ENCODE measurements at regions of chr2 and their contacts with region 1.

Region 1: DNA sequence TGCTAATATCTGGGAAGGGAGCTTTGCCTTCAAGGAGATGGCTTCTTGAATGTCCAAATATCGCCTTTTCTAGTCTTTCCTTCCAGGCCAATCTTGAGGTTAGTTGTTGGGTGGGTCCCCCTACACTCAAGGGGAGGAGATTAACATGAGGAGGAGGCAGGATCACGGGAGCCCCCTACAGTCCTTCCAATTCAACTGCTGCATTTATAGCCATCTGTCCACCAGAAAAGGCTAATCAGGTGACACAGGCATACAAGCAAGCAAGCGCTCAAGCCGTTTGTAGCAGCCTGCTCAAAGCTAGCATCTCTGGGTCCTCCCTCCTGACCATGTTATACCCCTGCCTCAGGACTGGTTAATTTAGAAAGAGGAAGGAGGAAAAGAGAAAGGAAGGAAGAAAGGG is 87.6 kb downstream of the MRPS9 start:
- DNase-seq: peak in 1 of 2 experiments; percentile 61
- H3K4me3 ChIP-seq: peak overlapping the region in 2 of 4 experiments; percentile 26 to 43; a peak in 2 of 8 replicates
- H3K27ac ChIP-seq: no peak overlapping the region
- H3K4me1 ChIP-seq: peaks cover 0 to 6% (median 2%) of the 10 kb centered on the region in 4 experiments; a peak in 2 of 7 replicates
- H3K27me3 ChIP-seq: no peaks in the 10 kb centered on the region
- CTCF ChIP-seq: peak; percentile 53 to 77 (median 59)
- EP300 ChIP-seq: no peak
- POLR2A ChIP-seq: no peak
- RAD21 ChIP-seq: peak; percentile 30 to 48

Region 2: DNA sequence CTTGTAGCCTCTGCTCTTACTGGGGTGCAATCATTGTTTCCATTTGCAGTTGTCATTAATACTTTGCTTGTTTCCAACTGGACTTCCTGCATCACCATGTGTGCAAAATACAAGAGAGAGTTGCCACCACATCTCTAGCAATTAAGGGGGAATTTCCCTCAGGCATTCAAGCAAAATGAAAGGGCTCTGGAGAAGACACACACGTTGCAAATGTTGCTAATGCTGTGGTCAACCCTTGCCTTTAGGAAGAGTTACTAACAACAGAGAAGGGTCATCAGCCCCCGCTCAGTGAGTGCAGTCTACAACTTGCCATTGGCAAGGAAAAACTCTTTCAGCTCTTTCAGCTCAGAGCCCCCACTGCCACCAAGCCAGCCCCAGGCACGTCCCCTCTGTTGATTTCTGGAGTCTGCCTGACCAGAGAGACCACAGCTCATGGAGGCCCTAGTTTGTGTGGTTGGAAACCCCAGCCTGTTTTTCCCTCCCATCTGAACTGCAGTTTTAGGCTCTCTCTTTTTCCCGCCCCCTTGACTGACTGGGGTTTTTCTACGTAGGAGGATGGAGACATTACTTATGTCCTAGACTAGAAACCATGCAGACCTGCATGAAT is 90.3 kb after region 1 on chr2:
- CTCF ChIA-PET with region 1: interaction called, 12 read pairs
- POLR2A ChIA-PET with region 1: no interaction called
- DNase-seq: no peak
- H3K4me3 ChIP-seq: no peak overlapping the region
- H3K27ac ChIP-seq: no peak overlapping the region
- H3K4me1 ChIP-seq: no peaks in the 10 kb centered on the region
- H3K27me3 ChIP-seq: no peaks in the 10 kb centered on the region
- CTCF ChIP-seq: no peak
- EP300 ChIP-seq: no peak
- POLR2A ChIP-seq: no peak
- RAD21 ChIP-seq: no peak

Region 3: DNA sequence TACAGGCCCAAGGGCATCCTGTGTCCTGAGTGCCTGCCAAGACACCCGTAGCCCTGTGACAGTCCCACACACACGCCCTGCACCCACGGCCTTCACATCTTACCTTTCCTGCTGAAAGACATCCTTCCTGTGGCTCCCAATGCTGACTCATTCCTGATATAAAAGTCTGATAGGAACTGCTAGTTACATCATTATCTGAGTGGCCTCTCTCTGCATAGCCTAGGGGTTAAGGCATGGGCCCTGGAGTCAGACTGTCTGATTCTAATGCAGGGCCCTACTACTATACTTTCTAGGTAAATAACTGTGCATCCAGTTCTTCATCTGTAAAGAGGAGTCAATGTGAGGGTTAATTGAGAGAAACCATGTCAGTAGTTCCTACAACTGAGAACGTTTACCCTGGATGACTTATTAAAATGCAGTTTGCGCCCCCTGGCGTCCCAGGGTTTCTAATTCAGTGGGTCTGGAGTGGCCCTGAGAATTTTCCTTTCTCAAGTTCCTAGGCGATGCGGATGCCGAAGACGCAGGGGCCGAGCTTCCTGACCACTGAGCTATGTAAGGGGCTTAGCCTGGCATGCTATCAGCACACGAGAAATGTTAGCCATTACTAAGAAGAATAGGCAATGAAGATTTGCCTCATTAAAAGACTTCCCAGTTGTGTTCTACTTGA is 110.1 kb after region 1 on chr2:
- CTCF ChIA-PET with region 1: interaction called, 541 read pairs
- POLR2A ChIA-PET with region 1: no interaction called
- DNase-seq: peak; percentile 82 to 88
- H3K4me3 ChIP-seq: no peak overlapping the region
- H3K27ac ChIP-seq: no peak overlapping the region
- H3K4me1 ChIP-seq: peaks cover 0 to 4% (median 0%) of the 10 kb centered on the region in 4 experiments; a peak in 2 of 7 replicates
- H3K27me3 ChIP-seq: no peaks in the 10 kb centered on the region; a peak in 1 of 7 replicates
- CTCF ChIP-seq: peak; percentile 57 to 84 (median 79)
- EP300 ChIP-seq: no peak
- POLR2A ChIP-seq: no peak
- RAD21 ChIP-seq: peak; percentile 79 to 86

Region 4: DNA sequence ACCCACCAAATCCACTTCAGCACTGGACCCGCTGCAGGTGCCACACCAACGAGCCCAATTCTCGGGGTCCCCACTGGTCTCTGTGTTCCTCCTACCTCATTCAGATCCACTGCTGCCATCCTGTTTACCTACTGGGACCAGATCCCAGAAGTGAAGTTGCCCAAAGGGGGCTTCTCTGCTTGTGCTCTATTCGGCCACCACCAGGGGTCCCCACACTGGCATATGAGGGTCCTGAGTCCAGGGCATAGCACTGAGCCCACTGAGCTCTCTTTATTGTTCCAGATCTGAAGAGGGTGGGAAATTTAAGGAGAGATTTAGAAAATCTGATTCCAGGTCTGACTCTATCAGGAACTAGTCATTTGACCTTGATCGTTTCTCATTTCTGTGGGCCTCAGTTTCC is 118.5 kb after region 1 on chr2:
- CTCF ChIA-PET with region 1: interaction called, 541 read pairs
- POLR2A ChIA-PET with region 1: no interaction called
- DNase-seq: peak in 1 of 2 experiments; percentile 72
- H3K4me3 ChIP-seq: no peak overlapping the region
- H3K27ac ChIP-seq: no peak overlapping the region
- H3K4me1 ChIP-seq: peaks cover 0 to 2% (median under 1%) of the 10 kb centered on the region in 4 experiments; a peak in 1 of 7 replicates
- H3K27me3 ChIP-seq: no peaks in the 10 kb centered on the region
- CTCF ChIP-seq: peak; percentile 64 to 76 (median 69)
- EP300 ChIP-seq: no peak
- POLR2A ChIP-seq: no peak
- RAD21 ChIP-seq: peak; percentile 51 to 60

Measured in H1 (cell line).